CD14-positive monocyte (primary cell): ENCODE measurements at regions of chr6 and their contacts with region 1.

Region 1: DNA sequence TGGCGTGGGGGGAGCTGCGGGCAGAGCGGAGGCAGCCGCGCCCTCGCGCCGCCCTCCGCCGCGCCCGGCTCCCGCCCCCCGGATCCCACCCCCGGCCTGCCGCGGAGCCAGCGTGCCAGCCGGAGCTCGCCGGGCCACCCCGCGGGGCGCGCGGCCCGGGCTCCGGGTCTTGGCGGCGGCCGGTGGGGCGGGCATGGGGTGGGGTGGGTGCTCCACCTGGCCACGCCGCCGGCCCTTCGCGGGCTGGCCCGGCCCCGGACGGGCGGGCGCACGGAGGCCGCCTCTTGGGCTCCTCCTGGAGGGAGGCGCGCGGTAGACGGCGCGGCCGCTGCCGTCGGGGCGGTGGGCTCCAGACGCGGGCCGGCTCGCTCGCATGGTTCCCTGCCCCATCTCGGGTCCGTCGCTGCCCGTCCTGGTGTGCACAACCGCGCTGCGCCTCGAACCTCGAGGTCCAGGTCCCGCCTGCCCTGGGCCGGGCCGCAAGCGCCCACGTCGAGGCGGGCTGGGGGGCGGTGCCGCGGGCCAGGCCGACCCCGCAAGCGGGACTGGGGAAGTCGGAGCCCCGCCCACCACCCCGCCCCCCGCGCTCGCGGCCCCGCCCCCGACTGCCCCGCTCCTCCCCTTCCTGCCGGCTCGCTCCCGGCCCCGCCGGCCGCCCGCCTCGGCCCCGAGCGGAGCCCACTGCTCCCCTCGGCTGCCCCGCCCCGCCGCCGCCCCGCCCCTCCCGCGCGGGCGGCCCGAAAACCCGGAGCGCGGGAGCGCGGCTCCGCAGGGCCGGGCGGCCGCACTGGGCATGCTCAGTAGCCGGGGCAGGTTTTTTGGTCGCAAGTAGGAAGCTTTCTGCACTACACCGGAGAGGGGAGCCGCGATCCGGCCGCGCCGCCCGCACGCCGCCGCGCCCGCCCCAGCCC is at the start of gene CDYL:
- DNase-seq: peak; percentile 84 to 89 (median 85)
- H3K4me3 ChIP-seq: peak within 1 kb of the TSS; percentile 71 to 95 (median 79)
- H3K4me3 Mint-ChIP-seq: peak within 1 kb of the TSS; percentile 92
- H3K27ac ChIP-seq: peak within 1 kb of the TSS; percentile 74 to 78
- H3K27ac Mint-ChIP-seq: peak within 1 kb of the TSS; percentile 74 to 89 (median 84)
- H3K4me1 ChIP-seq: peaks cover 25 to 36% of the 10 kb centered on the region in 2 donors
- H3K4me1 Mint-ChIP-seq: peaks cover 38% of the 10 kb centered on the region
- H3K27me3 ChIP-seq: peaks cover 4 to 22% of the 10 kb centered on the region in 2 donors
- H3K27me3 Mint-ChIP-seq: peaks cover 17 to 24% (median 17%) of the 10 kb centered on the region in 3 donors
- CTCF ChIP-seq: no peak
- polyA plus RNA-seq, gene CDYL: 2.9 to 21.2 (median 4.2) TPM

Region 2: GRCh38 chr6:4135665-4136353 is 640.0 kb before region 1 on chr6:
- intact Hi-C with region 1: loop called (anchors 5 to 10 kb)
- DNase-seq: peak; percentile 76 to 82 (median 78)
- H3K4me3 ChIP-seq: peak overlapping the region; percentile 46 to 85 (median 85)
- H3K4me3 Mint-ChIP-seq: peak overlapping the region; percentile 81 to 91
- H3K27ac ChIP-seq: peak overlapping the region; percentile 4 to 60
- H3K27ac Mint-ChIP-seq: peak overlapping the region in 6 of 7 donors; percentile 38 to 86 (median 76)
- H3K4me1 ChIP-seq: peaks cover 13 to 21% of the 10 kb centered on the region in 2 donors
- H3K4me1 Mint-ChIP-seq: peaks cover 17% of the 10 kb centered on the region
- H3K27me3 ChIP-seq: no peaks in the 10 kb centered on the region
- H3K27me3 Mint-ChIP-seq: peaks cover 2 to 6% (median 5%) of the 10 kb centered on the region in 3 donors
- CTCF ChIP-seq: no peak

Region 3: DNA sequence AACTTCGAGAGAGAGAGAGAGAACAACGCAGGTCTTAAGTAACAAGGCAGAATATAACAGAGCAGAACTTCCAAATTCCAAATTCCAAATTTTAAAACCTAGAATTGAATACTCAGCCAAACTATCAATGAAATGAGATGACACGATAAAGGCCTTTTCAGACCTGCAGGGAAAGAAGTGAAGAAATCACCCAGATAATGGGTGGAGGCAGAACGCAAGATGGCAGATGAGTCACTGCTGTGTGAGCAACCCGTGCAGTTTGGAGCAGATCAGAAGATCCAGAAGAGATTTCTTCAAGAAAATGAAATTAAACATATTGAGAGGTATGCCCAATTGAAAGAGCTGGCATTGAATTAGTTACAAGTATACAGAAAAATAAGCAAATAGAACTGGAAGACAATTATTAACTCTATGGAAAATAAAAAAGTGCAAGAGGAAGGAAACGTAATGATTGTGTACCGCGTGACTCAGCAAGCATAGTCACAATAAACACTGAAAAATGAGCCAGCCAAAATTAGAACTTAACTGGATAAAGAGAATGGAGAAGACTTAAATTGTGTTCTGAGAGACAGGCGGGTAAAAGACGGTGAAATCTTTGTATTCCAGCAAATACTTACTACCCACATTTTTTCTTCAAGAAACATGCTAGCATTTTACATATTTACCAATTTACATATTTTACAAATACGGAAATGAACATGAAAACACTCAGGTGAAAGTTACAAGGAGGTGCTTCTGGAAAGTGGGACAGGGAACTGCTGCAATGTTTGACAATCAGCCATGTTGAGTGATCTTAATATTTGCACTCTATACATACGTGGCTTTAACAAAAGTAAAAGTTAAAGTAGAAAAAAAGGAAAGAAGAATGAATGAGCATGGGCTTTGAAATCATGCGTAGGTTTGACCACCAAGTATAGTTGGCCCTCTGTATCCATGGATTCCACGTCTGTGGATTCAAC is 87.6 kb before region 1 on chr6:
- intact Hi-C with region 1: loop called in 1 of 2 experiments (anchors 10 kb)
- DNase-seq: peak; percentile 84 to 90 (median 84)
- H3K4me3 ChIP-seq: peak overlapping the region; percentile 36 to 69 (median 49)
- H3K4me3 Mint-ChIP-seq: peak overlapping the region; percentile 58 to 94
- H3K27ac ChIP-seq: peak overlapping the region; percentile 58 to 92
- H3K27ac Mint-ChIP-seq: peak overlapping the region; percentile 95 to 99 (median 97)
- H3K4me1 ChIP-seq: peaks cover 17 to 23% of the 10 kb centered on the region in 2 donors
- H3K4me1 Mint-ChIP-seq: peaks cover 23% of the 10 kb centered on the region
- H3K27me3 ChIP-seq: no peaks in the 10 kb centered on the region
- H3K27me3 Mint-ChIP-seq: peaks cover 1 to 6% (median 2%) of the 10 kb centered on the region in 3 donors
- CTCF ChIP-seq: no peak

Region 4: GRCh38 chr6:4889701-4890100 is 113.9 kb after region 1 on chr6:
- intact Hi-C with region 1: no loop called
- DNase-seq: peak; percentile 6 to 14 (median 10)
- H3K4me3 ChIP-seq: no peak overlapping the region
- H3K4me3 Mint-ChIP-seq: no peak overlapping the region
- H3K27ac ChIP-seq: no peak overlapping the region
- H3K27ac Mint-ChIP-seq: peak overlapping the region in 4 of 7 donors; percentile 8 to 76 (median 46)
- H3K4me1 ChIP-seq: peaks cover 17 to 24% of the 10 kb centered on the region in 2 donors
- H3K4me1 Mint-ChIP-seq: peaks cover 43% of the 10 kb centered on the region
- H3K27me3 ChIP-seq: no peaks in the 10 kb centered on the region
- H3K27me3 Mint-ChIP-seq: no peaks in the 10 kb centered on the region
- CTCF ChIP-seq: no peak

Region 5: DNA sequence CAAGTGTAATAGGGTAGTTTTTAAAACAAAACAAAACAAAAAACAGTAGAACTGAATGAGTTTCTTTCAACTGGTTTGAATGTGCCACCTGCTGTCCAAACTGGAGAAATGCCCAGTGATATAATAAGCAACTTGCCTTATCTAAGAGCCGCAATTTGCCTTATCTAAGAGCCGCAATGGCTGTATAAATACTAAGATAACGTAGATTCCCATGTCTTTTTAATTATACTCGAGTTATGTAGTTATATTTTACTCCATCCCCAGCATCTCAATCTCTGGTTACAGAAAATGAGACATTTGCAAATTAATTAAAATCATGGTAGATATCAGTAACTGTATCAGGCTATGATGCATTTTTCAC is 160.8 kb after region 1 on chr6:
- intact Hi-C with region 1: loop called in 1 of 2 experiments (anchors 10 kb)
- DNase-seq: peak in 2 of 3 donors; percentile 21 to 23
- H3K4me3 ChIP-seq: no peak overlapping the region
- H3K4me3 Mint-ChIP-seq: no peak overlapping the region
- H3K27ac ChIP-seq: no peak overlapping the region
- H3K27ac Mint-ChIP-seq: peak overlapping the region in 1 of 7 donors; percentile 18
- H3K4me1 ChIP-seq: peaks cover 0 to under 1% of the 10 kb centered on the region in 2 donors
- H3K4me1 Mint-ChIP-seq: peaks cover 4% of the 10 kb centered on the region
- H3K27me3 ChIP-seq: no peaks in the 10 kb centered on the region
- H3K27me3 Mint-ChIP-seq: no peaks in the 10 kb centered on the region
- CTCF ChIP-seq: peak; percentile 61

Region 6: GRCh38 chr6:5003604-5004372 is 227.9 kb after region 1 on chr6 and contains the start of gene RPP40:
- intact Hi-C with region 1: loop called (anchors 5 kb)
- DNase-seq: peak; percentile 93 to 95 (median 95)
- H3K4me3 ChIP-seq: peak within 1 kb of the TSS; percentile 51 to 88 (median 67)
- H3K4me3 Mint-ChIP-seq: peak within 1 kb of the TSS; percentile 94 to 97
- H3K27ac ChIP-seq: peak within 1 kb of the TSS; percentile 57 to 79
- H3K27ac Mint-ChIP-seq: peak within 1 kb of the TSS; percentile 80 to 95 (median 92)
- H3K4me1 ChIP-seq: peaks cover 11 to 12% of the 10 kb centered on the region in 2 donors
- H3K4me1 Mint-ChIP-seq: peaks cover 8% of the 10 kb centered on the region
- H3K27me3 ChIP-seq: no peaks in the 10 kb centered on the region
- H3K27me3 Mint-ChIP-seq: no peaks in the 10 kb centered on the region
- CTCF ChIP-seq: peak; percentile 94
- polyA plus RNA-seq, gene RPP40: 1.7 to 11.1 (median 7.4) TPM

Region 7: DNA sequence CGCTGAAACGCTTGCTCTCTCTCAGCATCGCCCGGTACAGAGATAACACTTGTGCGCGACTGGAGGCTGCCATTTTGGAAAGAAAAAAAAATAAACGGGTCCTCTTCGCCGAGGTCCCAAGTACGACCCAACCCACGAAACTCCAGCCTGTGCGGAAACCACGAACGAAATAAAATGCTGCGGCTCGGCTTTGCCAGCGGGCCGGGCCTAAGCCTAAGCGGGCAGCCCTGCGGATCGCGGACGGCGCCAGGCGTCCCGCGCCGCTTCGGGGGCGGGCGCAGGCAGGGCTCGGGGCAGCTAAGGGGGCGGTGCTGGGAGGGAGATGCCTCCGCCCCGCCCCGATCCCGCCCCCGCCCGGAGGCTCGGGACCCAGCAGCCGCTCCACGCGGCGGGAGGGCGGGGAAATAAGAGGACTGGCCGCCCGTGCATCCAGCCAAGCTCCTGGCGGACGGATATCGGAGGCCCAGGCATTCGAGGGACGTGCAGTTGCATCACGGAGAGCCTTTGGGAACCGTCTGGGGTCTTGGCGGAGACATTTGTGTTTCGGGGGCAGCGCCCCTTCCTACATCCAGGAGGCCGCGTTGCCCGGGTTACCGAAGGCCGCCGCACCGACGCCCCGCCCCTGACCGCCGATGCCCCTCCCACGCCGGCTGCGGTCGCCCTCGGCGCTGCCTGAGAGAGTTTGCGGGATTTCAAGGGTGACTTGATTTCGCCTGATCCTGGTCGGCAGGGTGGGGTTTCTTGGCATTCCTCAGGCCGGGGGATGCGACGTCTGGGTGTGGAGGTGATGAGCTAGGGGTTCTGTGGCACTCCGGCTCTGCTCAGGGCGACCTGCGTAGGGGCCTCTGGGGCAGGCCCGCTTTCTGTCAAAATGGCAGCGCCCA is 485.1 kb after region 1 on chr6 and contains the starts of genes FARS2 and LYRM4:
- intact Hi-C with region 1: loop called in 1 of 2 experiments (anchors 5 kb)
- DNase-seq: peak; percentile 81 to 87 (median 82)
- H3K4me3 ChIP-seq: peak within 1 kb of the TSS; percentile 83 to 99 (median 91)
- H3K4me3 Mint-ChIP-seq: peak within 1 kb of the TSS; percentile 95 to 98
- H3K27ac ChIP-seq: peak within 1 kb of the TSS; percentile 77 to 96
- H3K27ac Mint-ChIP-seq: peak within 1 kb of the TSS; percentile 97 to 100 (median 100)
- H3K4me1 ChIP-seq: peaks cover 17 to 21% of the 10 kb centered on the region in 2 donors
- H3K4me1 Mint-ChIP-seq: peaks cover 19% of the 10 kb centered on the region
- H3K27me3 ChIP-seq: no peaks in the 10 kb centered on the region
- H3K27me3 Mint-ChIP-seq: peaks cover 0 to 1% (median 0%) of the 10 kb centered on the region in 3 donors
- CTCF ChIP-seq: no peak
- polyA plus RNA-seq, gene FARS2: 12.2 to 21.6 (median 17.7) TPM
- polyA plus RNA-seq, gene LYRM4: 13.7 to 19.6 (median 18.1) TPM

Region 8: GRCh38 chr6:6008648-6009421 is 1233.0 kb after region 1 on chr6:
- intact Hi-C with region 1: loop called in 1 of 2 experiments (anchors 10 kb)
- DNase-seq: peak in 2 of 3 donors; percentile 35 to 46
- H3K4me3 ChIP-seq: peak overlapping the region; percentile 40 to 74 (median 41)
- H3K4me3 Mint-ChIP-seq: peak overlapping the region; percentile 71 to 97
- H3K27ac ChIP-seq: no peak overlapping the region
- H3K27ac Mint-ChIP-seq: no peak overlapping the region
- H3K4me1 ChIP-seq: peaks cover 38 to 50% of the 10 kb centered on the region in 2 donors
- H3K4me1 Mint-ChIP-seq: peaks cover 49% of the 10 kb centered on the region
- H3K27me3 ChIP-seq: peaks cover 80 to 99% of the 10 kb centered on the region in 2 donors
- H3K27me3 Mint-ChIP-seq: peaks cover 88 to 95% (median 91%) of the 10 kb centered on the region in 3 donors
- CTCF ChIP-seq: no peak